MCF 10A (cell line): ENCODE measurements at regions of chr11 and their contacts with region 1.

Region 1: DNA sequence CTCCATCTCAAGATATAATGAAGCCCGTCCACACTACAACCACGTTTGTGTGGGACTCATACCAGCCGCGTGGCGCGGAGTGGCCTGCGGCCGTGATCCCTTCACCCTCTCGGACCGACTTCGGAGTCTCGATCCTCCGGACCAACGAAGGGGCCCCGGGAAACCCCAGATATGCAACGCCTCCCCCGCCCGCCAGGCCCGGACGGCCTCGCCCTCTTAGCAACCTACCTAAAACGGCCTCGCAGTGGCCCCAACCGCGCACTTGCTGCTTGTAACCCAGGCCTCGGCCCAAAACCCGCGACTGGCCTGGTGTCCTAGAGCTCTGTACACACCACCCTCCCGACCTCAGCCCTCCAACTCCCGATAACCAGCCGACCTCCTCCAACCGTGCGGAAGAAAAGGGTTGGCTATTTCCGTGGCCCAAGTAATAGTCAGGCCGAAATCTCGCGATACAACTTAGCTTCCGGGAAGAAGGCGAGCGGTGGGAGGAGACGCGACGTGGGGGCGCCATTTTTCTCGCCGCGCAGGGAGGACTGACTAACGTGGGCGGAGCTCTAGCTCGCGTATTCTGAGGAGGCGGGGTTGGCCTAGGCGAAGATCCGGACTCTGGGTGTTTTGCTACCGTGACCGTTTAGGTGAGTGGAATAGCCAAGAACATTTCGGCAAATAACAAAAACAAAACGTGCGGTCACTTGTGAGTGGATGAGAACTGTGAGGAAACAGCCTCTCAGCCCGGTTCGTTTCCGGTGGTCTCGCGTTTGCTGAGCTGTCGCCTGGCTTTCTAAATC is at the starts of genes C11orf54 and TAF1D:
- DNase-seq: peak; percentile 99
- H3K4me3 Mint-ChIP-seq: peak within 1 kb of the TSS; percentile 98
- H3K27ac Mint-ChIP-seq: peak within 1 kb of the TSS; percentile 99
- H3K4me1 Mint-ChIP-seq: peaks cover 37% of the 10 kb centered on the region
- H3K27me3 Mint-ChIP-seq: no peaks in the 10 kb centered on the region
- CTCF ChIP-seq: no peak
- total RNA-seq, gene C11orf54: 13.8 and 23.1 TPM in 2 replicates
- total RNA-seq, gene TAF1D: 165 and 212 TPM in 2 replicates

Region 2: DNA sequence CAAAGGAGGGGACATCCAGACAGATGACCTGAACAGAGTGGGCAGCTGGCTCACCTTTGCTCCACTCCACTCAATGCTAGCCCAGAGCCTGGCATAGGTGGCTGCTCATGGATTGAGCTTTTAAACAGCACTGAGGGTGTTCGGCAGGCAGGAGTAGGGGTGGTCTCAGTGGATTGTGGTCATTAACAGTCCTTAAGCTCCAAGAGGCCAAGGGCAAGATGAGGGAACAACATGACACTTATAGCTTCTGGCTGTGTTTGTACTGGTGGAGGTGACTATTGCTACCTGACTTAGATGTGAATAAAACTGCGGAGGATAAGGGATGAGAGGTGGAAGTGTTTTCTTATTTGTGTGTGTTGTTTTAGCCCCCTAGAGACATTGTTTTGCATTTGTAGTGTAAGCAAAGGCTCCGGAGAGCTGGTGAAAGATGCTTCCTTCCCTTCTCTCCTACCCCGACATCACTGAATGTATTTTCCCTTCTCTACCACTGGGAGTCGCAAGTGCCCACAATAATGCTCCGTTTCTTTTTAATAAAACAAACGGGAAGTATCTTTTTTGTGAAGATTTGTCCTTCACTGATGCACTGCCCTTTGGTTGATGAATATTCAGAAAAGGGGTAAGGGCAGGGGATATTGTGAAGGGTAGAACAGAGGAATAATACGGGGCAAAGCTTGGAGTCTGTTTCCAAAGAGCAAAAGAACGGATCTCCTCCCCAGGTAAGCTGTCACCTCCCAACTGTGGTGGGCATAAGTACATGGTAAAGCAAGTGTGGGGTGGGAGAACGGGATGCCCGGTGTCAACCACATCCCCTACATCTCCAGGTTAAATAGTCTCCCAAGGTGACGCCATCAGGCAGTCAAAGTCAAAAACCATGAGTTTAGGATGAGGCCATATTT is 799.4 kb before region 1 on chr11:
- CTCF ChIA-PET with region 1: no interaction called
- POLR2A ChIA-PET with region 1: no interaction called
- intact Hi-C with region 1: no loop called
- DNase-seq: peak; percentile 71
- H3K4me3 Mint-ChIP-seq: no peak overlapping the region
- H3K27ac Mint-ChIP-seq: no peak overlapping the region
- H3K4me1 Mint-ChIP-seq: no peaks in the 10 kb centered on the region
- H3K27me3 Mint-ChIP-seq: no peaks in the 10 kb centered on the region
- CTCF ChIP-seq: peak; percentile 78

Region 3: GRCh38 chr11:92960886-92961285 is 780.4 kb before region 1 on chr11:
- CTCF ChIA-PET with region 1: no interaction called
- POLR2A ChIA-PET with region 1: no interaction called
- intact Hi-C with region 1: no loop called
- DNase-seq: peak; percentile 8
- H3K4me3 Mint-ChIP-seq: no peak overlapping the region
- H3K27ac Mint-ChIP-seq: no peak overlapping the region
- H3K4me1 Mint-ChIP-seq: peaks cover 9% of the 10 kb centered on the region
- H3K27me3 Mint-ChIP-seq: no peaks in the 10 kb centered on the region
- CTCF ChIP-seq: no peak

Region 4: GRCh38 chr11:93396316-93396715 is 345.0 kb before region 1 on chr11:
- CTCF ChIA-PET with region 1: no interaction called
- POLR2A ChIA-PET with region 1: no interaction called
- intact Hi-C with region 1: no loop called
- DNase-seq: no peak
- H3K4me3 Mint-ChIP-seq: no peak overlapping the region
- H3K27ac Mint-ChIP-seq: no peak overlapping the region
- H3K4me1 Mint-ChIP-seq: peaks cover 5% of the 10 kb centered on the region
- H3K27me3 Mint-ChIP-seq: no peaks in the 10 kb centered on the region
- CTCF ChIP-seq: no peak

Region 5: GRCh38 chr11:93727985-93728791 is 13.1 kb before region 1 on chr11:
- CTCF ChIA-PET with region 1: interaction called, 4 read pairs
- POLR2A ChIA-PET with region 1: interaction called, 123 read pairs
- intact Hi-C with region 1: loop called (anchors 1 kb)
- DNase-seq: peak; percentile 27
- H3K4me3 Mint-ChIP-seq: no peak overlapping the region
- H3K27ac Mint-ChIP-seq: no peak overlapping the region
- H3K4me1 Mint-ChIP-seq: no peaks in the 10 kb centered on the region
- H3K27me3 Mint-ChIP-seq: no peaks in the 10 kb centered on the region
- CTCF ChIP-seq: no peak

Region 6: GRCh38 chr11:93791493-93791892 is 50.2 kb after region 1 on chr11:
- CTCF ChIA-PET with region 1: no interaction called
- POLR2A ChIA-PET with region 1: interaction called, 169 read pairs
- intact Hi-C with region 1: no loop called
- DNase-seq: peak; percentile 45
- H3K4me3 Mint-ChIP-seq: no peak overlapping the region
- H3K27ac Mint-ChIP-seq: no peak overlapping the region
- H3K4me1 Mint-ChIP-seq: peaks cover 16% of the 10 kb centered on the region
- H3K27me3 Mint-ChIP-seq: no peaks in the 10 kb centered on the region
- CTCF ChIP-seq: no peak

Region 7: DNA sequence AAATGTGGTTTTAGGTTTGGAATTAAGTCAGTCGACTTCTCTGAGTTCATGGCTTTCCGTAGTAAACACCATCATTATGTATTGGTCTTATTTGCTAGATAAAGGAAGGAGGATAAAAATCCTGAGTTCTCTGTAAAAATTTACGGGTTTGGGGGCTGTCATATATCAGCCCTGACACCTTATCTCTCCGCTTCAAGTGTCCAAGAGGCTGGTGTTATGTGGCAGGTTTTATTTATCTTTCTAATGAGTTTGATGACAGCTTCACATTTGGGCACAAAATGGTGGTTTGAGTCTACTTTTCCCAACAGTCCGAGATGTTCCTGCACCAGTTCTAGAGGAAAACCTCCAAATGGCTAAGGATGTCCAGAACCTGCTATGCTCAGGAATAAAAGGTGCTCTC is 176.4 kb after region 1 on chr11:
- CTCF ChIA-PET with region 1: no interaction called
- POLR2A ChIA-PET with region 1: no interaction called
- intact Hi-C with region 1: no loop called
- DNase-seq: no peak
- H3K4me3 Mint-ChIP-seq: no peak overlapping the region
- H3K27ac Mint-ChIP-seq: no peak overlapping the region
- H3K4me1 Mint-ChIP-seq: no peaks in the 10 kb centered on the region
- H3K27me3 Mint-ChIP-seq: no peaks in the 10 kb centered on the region
- CTCF ChIP-seq: no peak